Tibial artery (tissue), 4 donors: ENCODE measurements at regions of chrX and their contacts with region 1.

Region 1: GRCh38 chrX:17689971-17690409 is 47.3 kb upstream of the SCML1 start:
- DNase-seq: peak; percentile 41 to 63
- H3K4me3 ChIP-seq: no peak overlapping the region
- H3K27ac ChIP-seq: no peak overlapping the region
- H3K4me1 ChIP-seq: peaks cover 0 to 10% (median 2%) of the 10 kb centered on the region in 4 donors
- H3K27me3 ChIP-seq: no peaks in the 10 kb centered on the region
- CTCF ChIP-seq: peak; percentile 54 to 74

Region 2: GRCh38 chrX:17242470-17242869 is 447.5 kb before region 1 on chrX:
- intact Hi-C with region 1: loop called (anchors 5 kb)
- DNase-seq: peak; percentile 32 to 59
- H3K4me3 ChIP-seq: no peak overlapping the region
- H3K27ac ChIP-seq: no peak overlapping the region
- H3K4me1 ChIP-seq: peaks cover 0 to 5% (median 0%) of the 10 kb centered on the region in 4 donors
- H3K27me3 ChIP-seq: no peaks in the 10 kb centered on the region
- CTCF ChIP-seq: peak; percentile 67 to 73

Region 3: GRCh38 chrX:17542123-17542522 is 147.9 kb before region 1 on chrX:
- intact Hi-C with region 1: loop called (anchors 5 kb)
- DNase-seq: peak in 1 of 2 donors; percentile 76
- H3K4me3 ChIP-seq: no peak overlapping the region
- H3K27ac ChIP-seq: no peak overlapping the region
- H3K4me1 ChIP-seq: peaks cover 0 to 11% (median 5%) of the 10 kb centered on the region in 4 donors
- H3K27me3 ChIP-seq: no peaks in the 10 kb centered on the region
- CTCF ChIP-seq: no peak